IMR-90 (cell line): ENCODE measurements at regions of chr20 and their contacts with region 1.

Region 1: DNA sequence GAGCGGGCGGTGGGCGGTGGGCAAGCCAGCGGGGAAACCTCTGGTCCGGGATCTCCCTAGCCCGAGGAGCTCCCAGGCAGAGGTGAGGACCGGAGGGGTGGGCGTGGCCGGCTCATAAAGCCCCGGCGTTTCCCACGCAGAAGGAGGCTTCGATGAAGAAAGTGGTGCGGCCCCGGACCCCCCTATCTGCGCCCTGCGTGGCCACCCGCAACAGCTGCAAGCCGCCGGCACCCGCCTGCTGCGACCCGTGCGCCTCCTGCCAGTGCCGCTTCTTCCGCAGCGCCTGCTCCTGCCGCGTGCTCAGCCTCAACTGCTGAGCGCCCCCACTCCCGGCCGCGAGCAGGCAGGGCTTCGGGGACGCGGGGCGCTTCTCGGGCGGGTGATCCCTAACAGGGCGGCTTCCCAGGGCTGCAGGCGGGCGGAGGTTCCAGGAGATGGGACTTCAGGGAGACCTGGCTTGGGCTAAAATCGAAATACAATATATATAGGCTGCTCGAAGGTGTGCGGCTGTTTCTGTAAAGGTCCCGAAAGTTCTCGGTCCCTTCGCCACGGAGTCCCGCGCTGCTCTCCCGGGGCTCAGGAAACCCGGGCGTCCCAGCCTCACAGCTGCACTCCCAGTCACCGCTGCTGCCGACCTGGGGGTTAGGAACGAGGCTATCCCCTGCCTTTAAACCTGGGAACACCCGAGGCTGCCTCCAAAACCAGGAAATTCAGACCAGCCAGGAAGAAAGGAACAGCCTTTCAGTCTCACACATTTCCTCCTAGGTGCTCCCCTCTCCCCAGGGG is 27.8 kb downstream of the ASIP start:
- DNase-seq: no peak
- ATAC-seq: peak; percentile 90
- H3K4me3 ChIP-seq: peak overlapping the region; percentile 20
- H3K27ac ChIP-seq: no peak overlapping the region
- H3K4me1 ChIP-seq: no peaks in the 10 kb centered on the region
- H3K27me3 ChIP-seq: no peaks in the 10 kb centered on the region
- CTCF ChIP-seq: no peak
- POLR2A ChIP-seq: no peak
- RAD21 ChIP-seq: no peak

Region 2: DNA sequence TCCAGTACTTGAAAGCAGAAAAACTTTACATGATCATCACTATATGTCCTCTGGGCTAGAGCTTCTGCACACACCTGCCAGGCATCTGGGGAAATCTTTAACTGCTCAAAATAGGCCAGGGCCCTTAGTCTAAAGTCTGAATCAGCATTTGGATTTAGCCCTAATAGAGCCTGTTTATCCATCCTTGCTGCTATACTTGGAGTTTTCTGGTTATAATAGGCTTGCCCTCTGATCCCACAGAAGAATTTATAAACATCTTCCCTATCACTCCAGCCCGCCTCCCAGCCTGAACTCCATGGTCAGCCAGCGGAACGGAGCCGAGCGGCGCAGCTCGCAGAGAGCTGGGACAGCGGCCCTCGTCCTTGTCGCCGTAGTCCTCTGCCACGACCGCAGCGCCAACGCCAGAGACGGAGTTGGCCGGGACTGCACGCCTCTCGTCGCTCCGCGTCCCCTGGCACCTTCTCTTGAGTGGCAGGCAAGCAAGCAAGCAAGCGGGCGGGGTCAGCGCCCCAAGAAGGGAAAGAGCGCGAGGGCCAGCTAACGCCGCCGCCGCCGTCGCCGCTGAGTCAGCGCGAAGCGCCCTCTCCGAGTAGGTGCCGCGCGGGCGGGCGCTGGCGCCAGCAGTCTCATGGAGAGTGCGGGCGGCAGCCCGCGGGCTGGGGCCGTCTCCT is 53.2 kb before region 1 on chr20:
- CTCF ChIA-PET with region 1: no interaction called
- POLR2A ChIA-PET with region 1: no interaction called
- dilution Hi-C with region 1: no loop called
- in situ Hi-C with region 1: loop called (anchors 10 kb)
- intact Hi-C with region 1: no loop called
- DNase-seq: peak; percentile 67
- ATAC-seq: peak; percentile 96
- H3K4me3 ChIP-seq: peak overlapping the region; percentile 94
- H3K27ac ChIP-seq: peak overlapping the region; percentile 95
- H3K4me1 ChIP-seq: no peaks in the 10 kb centered on the region
- H3K27me3 ChIP-seq: no peaks in the 10 kb centered on the region; the same call in 1 of the 2 replicates
- CTCF ChIP-seq: no peak
- POLR2A ChIP-seq: no peak
- RAD21 ChIP-seq: no peak

Region 3: GRCh38 chr20:34815636-34816035 is 546.6 kb after region 1 on chr20:
- CTCF ChIA-PET with region 1: no interaction called
- POLR2A ChIA-PET with region 1: interaction called, 13 read pairs
- dilution Hi-C with region 1: no loop called
- in situ Hi-C with region 1: no loop called
- intact Hi-C with region 1: no loop called
- DNase-seq: peak; percentile 33
- ATAC-seq: peak; percentile 37; the same call in 1 of the 2 replicates
- H3K4me3 ChIP-seq: no peak overlapping the region
- H3K27ac ChIP-seq: no peak overlapping the region
- H3K4me1 ChIP-seq: peaks cover 3% of the 10 kb centered on the region
- H3K27me3 ChIP-seq: no peaks in the 10 kb centered on the region
- CTCF ChIP-seq: no peak
- POLR2A ChIP-seq: no peak
- RAD21 ChIP-seq: no peak